Activated CD4-positive, alpha-beta T cell treated with anti-CD3 and anti-CD28 coated beads, Interleukin-2, amount 10 ng/mL, durations not matched to agents 24 days and 14 days (primary cell): ENCODE measurements at regions of chr13 and their contacts with region 1.

Region 1: GRCh38 chr13:23980160-23980551 is 82.9 kb upstream of the C1QTNF9B start:
- DNase-seq: peak; percentile 97
- H3K4me3 Mint-ChIP-seq: peak overlapping the region; percentile 85
- H3K27ac Mint-ChIP-seq: peak overlapping the region; percentile 69
- H3K4me1 Mint-ChIP-seq: peaks cover 14% of the 10 kb centered on the region
- H3K27me3 Mint-ChIP-seq: peaks cover 47% of the 10 kb centered on the region

Region 2: DNA sequence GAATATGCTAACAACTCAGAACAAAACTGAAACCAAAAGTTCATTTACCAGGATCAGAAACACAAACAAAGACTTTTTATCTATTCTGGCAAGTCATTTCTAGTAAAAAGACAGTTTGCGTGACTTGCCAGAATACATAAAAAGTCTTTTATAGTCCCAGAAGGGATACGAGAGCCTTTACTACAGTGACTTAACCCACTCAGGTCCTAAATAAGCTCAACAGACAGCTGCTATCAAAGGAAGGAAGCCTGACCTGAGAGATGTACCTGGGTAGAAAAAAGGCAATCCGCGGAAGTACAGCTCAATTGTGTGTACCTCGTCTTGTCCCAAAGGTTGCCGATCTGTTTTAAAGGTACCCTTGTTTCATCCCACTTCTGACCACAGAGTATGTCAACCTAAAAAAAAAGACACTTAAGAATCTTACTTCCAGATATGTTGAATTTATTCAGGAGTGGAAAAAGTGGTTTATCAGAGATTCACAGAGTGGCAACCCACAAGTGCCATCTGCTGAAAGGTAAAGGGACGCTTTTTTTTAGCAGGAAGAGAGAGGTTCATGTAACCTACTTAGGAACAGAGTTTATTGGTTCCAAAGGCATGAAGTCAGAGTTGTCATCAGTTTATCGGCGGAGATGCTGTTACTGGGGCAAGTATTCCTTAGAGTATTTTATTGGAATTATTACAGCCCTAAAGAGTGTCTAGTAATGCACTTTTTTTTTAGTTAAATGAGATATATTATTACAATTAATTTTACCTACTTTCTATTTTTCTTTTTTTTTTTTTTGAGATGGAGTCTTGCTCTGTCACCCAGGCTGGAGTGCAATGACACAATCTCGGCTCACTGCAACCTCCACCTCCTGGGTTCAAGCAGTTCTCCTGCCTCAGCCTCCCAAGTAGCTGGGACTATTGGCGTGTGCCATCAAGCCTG is 13.2 kb before region 1 on chr13:
- intact Hi-C with region 1: loop called (anchors 2 kb)
- DNase-seq: peak; percentile 85
- H3K4me3 Mint-ChIP-seq: peak overlapping the region; percentile 77
- H3K27ac Mint-ChIP-seq: peak overlapping the region; percentile 84
- H3K4me1 Mint-ChIP-seq: peaks cover 39% of the 10 kb centered on the region
- H3K27me3 Mint-ChIP-seq: no peaks in the 10 kb centered on the region